ENCODE measurements at regions of chr4 and their contacts with region 1.

Region 1: GRCh38 chr4:88514557-88515511 is 8.7 kb downstream of the PYURF start:
- DNase-seq: peak; percentile 47
- H3K4me3 ChIP-seq: no peak overlapping the region
- H3K27ac ChIP-seq: peak overlapping the region; percentile 26 to 58
- H3K4me1 ChIP-seq: no peaks in the 10 kb centered on the region
- H3K27me3 ChIP-seq: no peaks in the 10 kb centered on the region
- CTCF ChIP-seq: no peak
- POLR2A ChIP-seq: no peak

Region 2: DNA sequence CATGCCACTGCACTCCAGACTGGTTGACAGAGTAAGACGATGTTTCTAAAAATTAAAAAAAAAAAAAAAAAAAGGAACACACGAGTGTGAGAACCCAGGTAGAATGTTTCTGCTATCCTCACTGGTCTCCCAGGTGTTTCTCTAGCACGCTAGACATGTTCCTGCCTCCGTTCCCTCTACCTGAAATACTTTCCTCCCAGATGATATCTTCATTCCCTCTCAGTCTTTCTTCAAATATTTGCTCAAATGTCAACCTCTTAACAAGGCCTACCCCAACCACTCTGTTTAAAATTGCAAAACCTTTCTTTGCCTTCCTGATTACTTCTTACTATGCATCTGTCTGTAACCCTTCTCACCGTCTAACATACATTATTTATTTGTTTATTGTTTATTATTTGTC is 296.9 kb before region 1 on chr4:
- intact Hi-C with region 1: loop called (anchors 2 kb)
- DNase-seq: no peak
- H3K4me3 ChIP-seq: no peak overlapping the region
- H3K27ac ChIP-seq: no peak overlapping the region
- H3K4me1 ChIP-seq: no peaks in the 10 kb centered on the region
- H3K27me3 ChIP-seq: no peaks in the 10 kb centered on the region
- CTCF ChIP-seq: no peak
- POLR2A ChIP-seq: no peak

Region 3: DNA sequence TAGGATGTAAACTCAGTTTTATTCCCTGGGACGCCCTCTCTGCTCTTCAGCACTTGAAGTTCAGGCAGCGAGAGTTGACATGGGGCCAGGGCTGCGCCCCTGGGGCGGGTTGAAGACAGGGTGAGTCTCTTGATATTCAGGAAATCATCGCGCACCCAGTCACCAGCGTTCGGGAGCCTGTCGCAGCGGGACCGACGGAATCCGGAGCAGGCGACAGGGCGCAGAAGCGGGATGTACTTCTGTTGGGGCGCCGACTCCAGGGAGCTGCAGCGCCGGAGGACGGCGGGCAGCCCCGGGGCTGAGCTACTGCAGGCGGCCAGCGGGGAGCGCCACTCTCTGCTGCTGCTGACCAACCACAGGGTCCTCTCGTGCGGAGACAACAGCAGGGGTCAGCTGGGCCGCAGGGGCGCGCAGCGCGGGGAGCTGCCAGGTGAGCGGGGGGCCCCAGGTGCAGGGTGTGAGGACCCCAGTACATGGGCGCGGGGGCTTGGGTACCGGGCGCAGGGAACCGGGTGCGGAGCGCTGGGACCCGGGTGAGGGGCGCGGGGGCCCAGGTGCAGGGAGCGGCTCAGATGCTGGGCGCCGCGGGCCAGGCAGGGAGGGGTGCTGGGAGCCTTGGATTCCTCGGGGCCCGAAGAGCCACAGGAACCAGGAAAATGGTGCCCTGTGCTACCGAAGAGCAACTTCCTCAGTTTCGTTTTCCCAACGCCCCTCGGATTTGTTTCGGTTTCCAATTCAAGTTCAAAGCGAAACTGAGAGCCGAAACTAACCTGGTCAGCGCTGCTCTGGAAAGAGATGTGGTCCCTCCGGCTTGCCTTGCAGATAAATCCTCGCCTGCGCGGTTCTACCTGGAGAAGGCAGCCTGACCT is 135.9 kb before region 1 on chr4 and contains the start of gene HERC6:
- intact Hi-C with region 1: loop called (anchors 10 kb)
- DNase-seq: peak; percentile 79
- H3K4me3 ChIP-seq: peak within 1 kb of the TSS; percentile 97 to 99
- H3K27ac ChIP-seq: peak within 1 kb of the TSS; percentile 99
- H3K4me1 ChIP-seq: no peaks in the 10 kb centered on the region
- H3K27me3 ChIP-seq: no peaks in the 10 kb centered on the region
- CTCF ChIP-seq: peak; percentile 41 to 77 (median 62)
- POLR2A ChIP-seq: peak; percentile 26
- total RNA-seq, gene HERC6: 16.0 to 20.6 TPM

Measured in prostate gland (tissue), 2 donors.